Spleen (tissue), 13 donors: ENCODE measurements at regions of chr3 and their contacts with region 1.

Region 1: DNA sequence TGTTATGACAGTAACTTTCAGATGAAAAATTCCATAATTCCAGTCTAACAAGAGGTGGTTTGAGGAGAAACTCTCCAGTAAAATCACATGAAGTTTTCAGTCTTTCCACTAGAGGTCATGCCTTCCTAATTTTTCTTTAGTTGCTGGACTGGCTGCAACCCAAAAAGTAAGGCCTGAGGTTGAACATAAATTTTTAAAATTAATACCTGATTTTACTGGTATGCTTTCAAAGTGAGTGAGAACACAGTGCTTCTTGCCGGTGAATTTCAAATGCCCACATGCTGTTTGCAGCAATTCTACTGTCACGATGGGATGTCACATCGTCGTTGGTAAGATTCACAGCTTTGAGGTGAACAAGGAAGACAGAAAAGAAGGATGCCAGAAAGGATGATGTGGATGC is 89.0 kb upstream of the FGF12 start:
- DNase-seq: no peak
- H3K4me3 ChIP-seq: no peak overlapping the region
- H3K27ac ChIP-seq: no peak overlapping the region
- H3K4me1 ChIP-seq: no peaks in the 10 kb centered on the region
- H3K27me3 ChIP-seq: no peaks in the 10 kb centered on the region
- CTCF ChIP-seq: peak in 9 of 11 experiments; percentile 18 to 65 (median 54)
- POLR2A ChIP-seq: no peak

Region 2: GRCh38 chr3:192545333-192545732 is 271.0 kb before region 1 on chr3:
- intact Hi-C with region 1: no loop called
- DNase-seq: no peak
- H3K4me3 ChIP-seq: no peak overlapping the region
- H3K27ac ChIP-seq: no peak overlapping the region
- H3K4me1 ChIP-seq: peaks cover 0 to 4% (median 0%) of the 10 kb centered on the region in 6 donors
- H3K27me3 ChIP-seq: peaks cover 0 to 6% (median 0%) of the 10 kb centered on the region in 7 donors
- CTCF ChIP-seq: no peak
- POLR2A ChIP-seq: no peak

Region 3: GRCh38 chr3:193572426-193572908 is 756.1 kb after region 1 on chr3:
- intact Hi-C with region 1: loop called (anchors 5 kb)
- DNase-seq: no peak
- H3K4me3 ChIP-seq: no peak overlapping the region
- H3K27ac ChIP-seq: no peak overlapping the region
- H3K4me1 ChIP-seq: peaks cover 0 to 4% (median 0%) of the 10 kb centered on the region in 6 donors
- H3K27me3 ChIP-seq: no peaks in the 10 kb centered on the region
- CTCF ChIP-seq: peak in 10 of 11 experiments; percentile 20 to 82 (median 66)
- POLR2A ChIP-seq: no peak